HEK293 (cell line): ENCODE measurements at regions of chr21 and their contacts with region 1.

Region 1: GRCh38 chr21:34745557-34746255 is 76.9 kb downstream of the CLIC6 start:
- H3K4me3 ChIP-seq: no peak overlapping the region
- H3K27ac ChIP-seq: no peak overlapping the region
- H3K4me1 ChIP-seq: no peaks in the 10 kb centered on the region
- CTCF ChIP-seq: peak; percentile 69; the same call in 1 of the 2 replicates

Region 2: GRCh38 chr21:34302521-34302920 is 443.2 kb before region 1 on chr21:
- CTCF ChIA-PET with region 1: no interaction called
- POLR2A ChIA-PET with region 1: no interaction called
- H3K4me3 ChIP-seq: no peak overlapping the region
- H3K27ac ChIP-seq: no peak overlapping the region
- H3K4me1 ChIP-seq: no peaks in the 10 kb centered on the region
- CTCF ChIP-seq: no peak

Region 3: GRCh38 chr21:34693192-34693810 is 52.4 kb before region 1 on chr21:
- CTCF ChIA-PET with region 1: interaction called, 13 read pairs
- POLR2A ChIA-PET with region 1: no interaction called
- H3K4me3 ChIP-seq: no peak overlapping the region
- H3K27ac ChIP-seq: no peak overlapping the region
- H3K4me1 ChIP-seq: no peaks in the 10 kb centered on the region
- CTCF ChIP-seq: peak; percentile 57; the same call in 1 of the 2 replicates

Region 4: GRCh38 chr21:34761758-34762315 is 16.1 kb after region 1 on chr21:
- CTCF ChIA-PET with region 1: interaction called, 11 read pairs
- POLR2A ChIA-PET with region 1: no interaction called
- H3K4me3 ChIP-seq: no peak overlapping the region
- H3K27ac ChIP-seq: no peak overlapping the region
- H3K4me1 ChIP-seq: no peaks in the 10 kb centered on the region
- CTCF ChIP-seq: no peak

Region 5: DNA sequence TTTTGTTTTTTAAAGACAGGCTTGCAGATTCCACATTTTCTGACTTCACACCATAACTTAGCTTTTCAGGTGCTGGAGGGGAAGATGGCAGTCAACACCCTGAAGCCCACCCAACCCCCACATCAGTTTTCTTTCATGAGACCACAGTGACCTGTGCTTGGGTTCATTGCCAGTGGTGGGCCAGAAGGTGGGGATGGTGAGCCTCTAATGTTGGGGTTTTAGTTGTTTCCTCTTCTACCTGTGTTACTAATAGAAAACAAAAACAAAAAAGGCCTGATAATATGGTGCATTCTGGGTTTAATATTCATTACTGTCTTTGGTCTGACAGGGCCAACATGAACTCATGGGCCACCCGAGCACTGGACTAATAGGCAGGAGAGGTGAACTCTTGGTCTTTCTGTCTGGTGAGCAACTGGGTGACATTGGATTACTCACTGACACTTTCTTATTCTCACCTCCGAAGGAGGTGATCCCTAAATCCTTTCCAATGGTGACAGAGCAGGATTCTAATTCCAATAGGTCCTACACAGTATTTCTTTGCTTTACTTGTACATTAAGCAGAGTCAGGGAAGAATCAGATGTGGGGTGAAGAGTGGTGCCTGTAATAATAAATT is 55.9 kb after region 1 on chr21:
- CTCF ChIA-PET with region 1: interaction called, 16 read pairs
- POLR2A ChIA-PET with region 1: no interaction called
- H3K4me3 ChIP-seq: no peak overlapping the region
- H3K27ac ChIP-seq: no peak overlapping the region
- H3K4me1 ChIP-seq: no peaks in the 10 kb centered on the region; the same call in 1 of the 2 replicates
- CTCF ChIP-seq: peak; percentile 41

Region 6: DNA sequence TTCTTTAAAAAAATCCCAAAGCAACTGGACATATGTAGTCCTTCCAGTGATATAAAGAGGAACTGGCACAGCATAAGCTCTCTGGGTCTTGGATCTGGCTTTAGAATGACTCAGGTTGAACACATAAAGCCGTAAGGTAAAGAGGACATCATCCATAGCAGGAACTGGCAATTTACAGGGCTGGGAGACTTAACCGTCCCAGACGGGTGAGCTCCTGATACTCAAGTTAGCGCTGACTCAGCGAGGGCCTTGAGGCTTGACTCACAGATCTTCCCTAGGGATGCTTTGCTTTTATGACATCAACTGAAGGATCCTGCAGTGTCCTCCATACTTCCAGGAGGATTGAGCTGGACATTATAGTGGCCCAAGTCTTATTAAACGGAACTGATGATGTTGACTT is 77.2 kb after region 1 on chr21:
- CTCF ChIA-PET with region 1: no interaction called
- POLR2A ChIA-PET with region 1: no interaction called
- H3K4me3 ChIP-seq: no peak overlapping the region
- H3K27ac ChIP-seq: no peak overlapping the region
- H3K4me1 ChIP-seq: no peaks in the 10 kb centered on the region
- CTCF ChIP-seq: no peak

Region 7: DNA sequence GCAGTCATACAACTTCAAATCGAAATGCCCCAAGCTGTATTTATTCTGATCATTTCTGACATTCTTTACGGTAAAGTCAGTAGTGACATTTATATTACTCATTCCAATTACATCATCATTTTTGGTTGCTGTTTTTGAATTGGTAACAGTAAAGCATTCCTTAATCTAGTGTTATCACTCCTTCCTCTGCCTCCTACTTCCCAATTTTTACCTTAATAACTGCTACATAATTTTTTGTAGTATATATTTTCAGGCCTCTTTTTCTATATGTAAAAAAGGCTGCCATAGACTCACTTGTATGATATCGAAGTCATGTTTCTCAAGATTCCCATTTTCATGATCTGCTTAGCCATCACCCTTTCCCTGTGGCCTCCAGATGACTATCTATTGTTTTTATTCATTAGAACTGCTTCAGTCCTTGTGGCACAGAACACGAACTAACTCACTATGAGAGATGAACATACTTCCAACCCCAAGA is 136.2 kb after region 1 on chr21:
- CTCF ChIA-PET with region 1: interaction called, 40 read pairs
- POLR2A ChIA-PET with region 1: interaction called, 45 read pairs
- H3K4me3 ChIP-seq: peak overlapping the region; percentile 15
- H3K27ac ChIP-seq: no peak overlapping the region
- H3K4me1 ChIP-seq: peaks cover 15% of the 10 kb centered on the region; the same call in 1 of the 2 replicates
- CTCF ChIP-seq: no peak

Region 8: DNA sequence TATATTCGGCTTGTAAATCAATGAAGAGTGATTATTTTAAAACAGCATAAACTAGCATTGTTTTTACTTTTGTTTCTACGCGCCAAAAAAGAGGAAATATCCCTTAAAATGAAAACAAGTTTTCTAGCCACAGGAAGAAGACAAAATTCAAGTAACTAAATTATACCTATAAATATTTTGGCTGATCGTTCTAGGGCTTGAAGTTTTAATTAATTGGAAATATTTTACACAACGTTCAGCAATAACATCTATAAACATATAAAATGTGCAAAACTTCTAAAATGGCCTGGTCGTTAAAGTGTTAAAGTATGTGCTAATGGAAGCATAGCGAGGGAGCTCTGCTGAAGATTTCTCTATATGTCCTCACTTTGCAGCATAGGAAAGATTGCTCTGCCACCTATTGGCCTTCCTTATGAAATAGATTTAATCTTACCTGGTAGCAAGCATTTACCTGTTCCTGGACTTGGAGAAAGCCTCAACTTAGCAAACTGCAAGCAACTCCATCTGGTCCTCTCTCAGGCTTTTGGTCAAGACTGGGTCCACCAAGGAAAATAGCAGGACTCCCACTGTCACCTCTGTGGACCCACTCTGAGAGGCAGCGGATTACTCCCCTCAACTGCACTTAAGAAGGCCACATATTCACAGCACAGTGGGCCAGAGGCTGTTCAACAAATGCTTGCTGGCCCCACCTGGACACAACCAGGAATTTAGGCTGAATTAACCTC is 654.7 kb after region 1 on chr21:
- CTCF ChIA-PET with region 1: interaction called, 20 read pairs
- POLR2A ChIA-PET with region 1: interaction called, 3 read pairs
- H3K4me3 ChIP-seq: no peak overlapping the region
- H3K27ac ChIP-seq: no peak overlapping the region
- H3K4me1 ChIP-seq: no peaks in the 10 kb centered on the region
- CTCF ChIP-seq: peak; percentile 24; the same call in 1 of the 2 replicates

Region 9: DNA sequence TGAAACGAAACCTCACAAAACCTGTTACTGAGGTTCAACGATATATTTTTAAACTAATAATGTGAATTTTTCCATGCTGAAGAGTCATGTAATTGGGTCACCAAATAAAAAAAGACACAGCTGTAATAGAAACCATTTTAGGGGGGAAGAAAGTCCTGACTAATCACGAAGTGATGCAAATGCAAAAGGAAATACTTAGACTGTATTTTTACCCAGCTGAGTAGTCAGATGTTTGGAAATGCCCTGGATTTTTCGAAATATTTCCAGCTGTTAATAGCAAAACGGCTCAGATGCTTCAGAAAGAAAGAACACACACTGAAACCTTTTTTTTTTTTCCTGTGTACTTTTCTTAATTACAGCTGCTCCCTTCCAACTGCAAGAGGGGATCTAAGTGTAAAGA is 1104.3 kb after region 1 on chr21:
- CTCF ChIA-PET with region 1: interaction called, 10 read pairs
- POLR2A ChIA-PET with region 1: no interaction called
- H3K4me3 ChIP-seq: no peak overlapping the region
- H3K27ac ChIP-seq: no peak overlapping the region
- H3K4me1 ChIP-seq: no peaks in the 10 kb centered on the region
- CTCF ChIP-seq: no peak